ENCODE measurements at regions of chr17 and their contacts with region 1.

Region 1: GRCh38 chr17:50169121-50169764 is 3.4 kb downstream of the SGCA start:
- DNase-seq: peak; percentile 66
- ATAC-seq: peak; percentile 77
- H3K4me3 Mint-ChIP-seq: peak overlapping the region; percentile 11
- H3K27ac Mint-ChIP-seq: peak overlapping the region; percentile 11
- H3K4me1 Mint-ChIP-seq: peaks cover 9% of the 10 kb centered on the region
- H3K27me3 Mint-ChIP-seq: no peaks in the 10 kb centered on the region

Region 2: DNA sequence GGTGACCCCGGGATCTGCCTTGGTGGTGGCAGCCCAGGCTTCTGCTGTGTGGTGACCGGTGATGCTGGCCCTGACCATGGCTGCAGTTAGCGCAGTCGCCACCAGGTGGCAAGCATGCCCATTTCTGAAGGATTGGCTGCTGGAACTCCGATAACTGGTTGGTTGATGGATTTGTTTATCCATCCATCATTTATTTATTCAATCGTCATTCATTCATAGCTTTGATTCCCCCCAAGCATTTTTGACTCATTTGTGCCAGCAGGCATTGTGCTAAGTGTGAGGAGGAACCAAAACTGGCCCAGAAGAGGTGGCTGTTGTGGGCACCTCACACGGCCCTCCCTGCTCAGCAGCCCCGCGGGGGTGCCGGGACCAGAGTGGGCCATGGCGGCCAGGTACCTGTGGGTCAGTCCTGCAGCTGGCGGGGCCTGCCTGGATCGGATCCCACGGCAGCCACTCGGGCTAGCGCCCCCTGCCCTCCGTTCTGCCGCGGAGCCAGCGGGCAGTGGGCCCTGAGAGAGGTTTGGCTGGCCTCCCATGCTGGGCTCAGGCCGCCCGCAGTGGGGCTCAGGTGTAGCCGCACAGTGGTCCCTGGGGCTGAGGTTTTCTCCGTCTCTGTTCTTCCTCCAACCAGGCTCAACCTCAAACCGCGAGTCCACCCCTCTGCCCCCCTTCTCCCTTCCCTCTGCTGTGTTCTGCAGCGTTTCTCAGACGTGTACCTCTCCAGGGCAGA is 142.2 kb before region 1 on chr17:
- CTCF ChIA-PET with region 1: no interaction called
- POLR2A ChIA-PET with region 1: no interaction called
- intact Hi-C with region 1: no loop called
- DNase-seq: peak; percentile 86
- ATAC-seq: peak; percentile 71
- H3K4me3 Mint-ChIP-seq: no peak overlapping the region
- H3K27ac Mint-ChIP-seq: no peak overlapping the region
- H3K4me1 Mint-ChIP-seq: peaks cover 11% of the 10 kb centered on the region
- H3K27me3 Mint-ChIP-seq: peaks cover 25% of the 10 kb centered on the region

Region 3: GRCh38 chr17:50151041-50151936 is 18.0 kb before region 1 on chr17:
- CTCF ChIA-PET with region 1: interaction called, 12 read pairs
- POLR2A ChIA-PET with region 1: interaction called, 3 read pairs
- intact Hi-C with region 1: no loop called
- DNase-seq: peak; percentile 95
- ATAC-seq: peak; percentile 66
- H3K4me3 Mint-ChIP-seq: peak overlapping the region; percentile 90
- H3K27ac Mint-ChIP-seq: peak overlapping the region; percentile 96
- H3K4me1 Mint-ChIP-seq: peaks cover 40% of the 10 kb centered on the region
- H3K27me3 Mint-ChIP-seq: no peaks in the 10 kb centered on the region

Measured in activated CD4-positive, alpha-beta T cell treated with anti-CD3 and anti-CD28 coated beads for 36 hours (primary cell).